B cell (primary cell): ENCODE measurements at regions of chr6 and their contacts with region 1.

Region 1: GRCh38 chr6:137951064-137951597 is 84.1 kb downstream of the TNFAIP3 start:
- DNase-seq: peak; percentile 68
- ATAC-seq: peak; percentile 72
- H3K4me3 ChIP-seq: no peak overlapping the region
- H3K4me3 Mint-ChIP-seq: no peak overlapping the region
- H3K27ac ChIP-seq: no peak overlapping the region
- H3K27ac Mint-ChIP-seq: peak overlapping the region; percentile 15
- H3K4me1 ChIP-seq: peaks cover 20 to 22% of the 10 kb centered on the region in 2 donors
- H3K4me1 Mint-ChIP-seq: peaks cover 21% of the 10 kb centered on the region
- H3K27me3 ChIP-seq: no peaks in the 10 kb centered on the region
- H3K27me3 Mint-ChIP-seq: no peaks in the 10 kb centered on the region
- CTCF ChIP-seq: no peak

Region 2: GRCh38 chr6:137975188-137975940 is 24.2 kb after region 1 on chr6:
- CTCF ChIA-PET with region 1: interaction called, 13 read pairs
- POLR2A ChIA-PET with region 1: no interaction called
- intact Hi-C with region 1: loop called (anchors 2 kb)
- DNase-seq: peak; percentile 57
- ATAC-seq: no peak
- H3K4me3 ChIP-seq: no peak overlapping the region
- H3K4me3 Mint-ChIP-seq: peak overlapping the region; percentile 3
- H3K27ac ChIP-seq: peak overlapping the region in 1 of 2 donors; percentile 68
- H3K27ac Mint-ChIP-seq: peak overlapping the region; percentile 12
- H3K4me1 ChIP-seq: peaks cover 8 to 17% of the 10 kb centered on the region in 2 donors
- H3K4me1 Mint-ChIP-seq: peaks cover 8% of the 10 kb centered on the region
- H3K27me3 ChIP-seq: no peaks in the 10 kb centered on the region
- H3K27me3 Mint-ChIP-seq: no peaks in the 10 kb centered on the region
- CTCF ChIP-seq: peak; percentile 56

Region 3: GRCh38 chr6:138007014-138007472 is 55.9 kb after region 1 on chr6:
- CTCF ChIA-PET with region 1: interaction called, 36 read pairs
- POLR2A ChIA-PET with region 1: no interaction called
- intact Hi-C with region 1: loop called (anchors 2 kb)
- DNase-seq: peak; percentile 36
- ATAC-seq: no peak
- H3K4me3 ChIP-seq: no peak overlapping the region
- H3K4me3 Mint-ChIP-seq: no peak overlapping the region
- H3K27ac ChIP-seq: no peak overlapping the region
- H3K27ac Mint-ChIP-seq: no peak overlapping the region
- H3K4me1 ChIP-seq: no peaks in the 10 kb centered on the region
- H3K4me1 Mint-ChIP-seq: peaks cover under 1% of the 10 kb centered on the region
- H3K27me3 ChIP-seq: peaks cover 0 to 2% (median 0%) of the 10 kb centered on the region in 4 experiments
- H3K27me3 Mint-ChIP-seq: peaks cover 10% of the 10 kb centered on the region
- CTCF ChIP-seq: peak; percentile 58